Activated CD4-positive, alpha-beta T cell treated with anti-CD3 and anti-CD28 coated beads for 36 hours (primary cell): ENCODE measurements at regions of chr17 and their contacts with region 1.

Region 1: GRCh38 chr17:38667099-38667786 is 7.5 kb downstream of the EPOP start:
- DNase-seq: peak; percentile 75
- ATAC-seq: peak; percentile 75
- H3K4me3 Mint-ChIP-seq: no peak overlapping the region
- H3K27ac Mint-ChIP-seq: no peak overlapping the region
- H3K4me1 Mint-ChIP-seq: peaks cover 14% of the 10 kb centered on the region
- H3K27me3 Mint-ChIP-seq: peaks cover 37% of the 10 kb centered on the region

Region 2: DNA sequence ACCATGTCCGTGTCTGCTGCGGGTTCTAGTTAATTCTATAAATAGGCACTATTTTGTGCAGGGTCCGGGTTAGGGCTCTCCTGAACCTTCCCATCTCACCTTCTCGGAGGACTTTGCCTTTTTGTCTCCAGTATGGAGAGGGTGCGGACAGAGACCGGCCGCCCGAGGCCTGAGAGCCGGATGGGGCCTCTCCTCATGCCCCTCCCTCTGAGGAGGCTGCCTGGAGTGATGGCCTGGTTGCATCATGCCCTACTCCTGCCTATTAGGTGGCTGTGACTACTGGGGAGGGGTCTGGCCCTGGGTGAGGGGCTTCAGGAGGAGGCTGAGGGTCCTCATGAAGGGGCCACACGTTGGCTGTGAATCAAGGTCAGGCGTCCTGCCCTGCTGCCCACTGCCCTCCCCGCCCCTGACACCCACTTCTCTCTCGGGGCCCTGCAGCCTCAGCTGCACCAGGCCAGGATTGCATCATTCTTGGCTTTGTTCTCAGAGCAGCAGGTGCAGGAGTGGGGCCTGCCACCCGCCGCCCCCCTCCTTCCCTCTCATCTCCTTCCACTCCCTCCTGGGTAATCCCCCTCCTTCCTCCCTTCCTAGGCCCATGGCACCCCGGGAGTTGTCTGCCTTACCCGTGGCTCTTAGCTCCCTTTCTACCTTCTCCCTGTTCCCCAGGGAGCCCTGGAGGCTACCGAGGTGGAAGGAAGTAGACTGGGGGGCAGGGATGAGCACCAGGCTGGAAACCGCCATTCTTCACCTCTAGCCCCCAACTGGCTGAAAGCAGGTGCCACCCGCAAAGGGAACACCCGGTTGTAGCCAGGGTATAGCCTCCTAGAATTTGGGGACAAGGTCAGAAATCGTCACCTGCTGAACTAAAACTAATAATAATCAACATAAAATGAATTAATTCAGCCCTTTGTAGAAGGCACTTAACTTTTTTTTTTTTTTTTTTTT is 251.7 kb before region 1 on chr17:
- CTCF ChIA-PET with region 1: interaction called, 3 read pairs
- POLR2A ChIA-PET with region 1: no interaction called
- intact Hi-C with region 1: loop called in 1 of 2 experiments (anchors 2 kb)
- DNase-seq: peak; percentile 64
- ATAC-seq: peak; percentile 69
- H3K4me3 Mint-ChIP-seq: peak overlapping the region; percentile 62
- H3K27ac Mint-ChIP-seq: peak overlapping the region; percentile 92
- H3K4me1 Mint-ChIP-seq: peaks cover 13% of the 10 kb centered on the region
- H3K27me3 Mint-ChIP-seq: peaks cover 32% of the 10 kb centered on the region

Region 3: DNA sequence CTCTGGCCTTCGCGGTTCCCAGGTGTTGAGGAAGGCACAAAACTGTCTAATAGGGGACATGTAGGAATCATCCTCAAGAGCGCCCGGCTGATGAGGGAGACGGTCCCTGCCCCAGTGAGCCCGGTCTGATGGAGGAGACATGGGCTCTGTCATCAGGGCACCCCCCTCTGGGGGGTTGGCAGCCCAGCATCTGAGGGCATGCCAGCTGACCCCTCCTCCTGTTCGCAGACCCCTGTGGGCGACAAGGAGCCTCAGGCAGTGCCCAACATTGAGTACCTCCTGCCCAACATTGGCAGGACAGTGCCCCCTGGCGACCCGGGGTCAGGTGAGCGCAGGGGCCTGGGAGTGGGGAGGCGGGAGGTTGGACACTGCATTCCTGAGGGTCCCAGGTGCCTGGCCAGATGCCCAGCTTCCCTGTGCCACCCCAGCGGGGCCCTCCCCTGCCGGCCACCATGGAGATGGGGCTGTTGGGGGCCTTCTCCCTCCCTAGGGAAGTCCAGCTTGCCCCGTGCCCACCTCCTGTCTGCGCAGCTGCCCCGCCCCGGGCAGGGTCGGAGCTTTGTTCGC is 169.0 kb before region 1 on chr17:
- CTCF ChIA-PET with region 1: interaction called, 12 read pairs
- POLR2A ChIA-PET with region 1: interaction called, 3 read pairs
- intact Hi-C with region 1: no loop called
- DNase-seq: no peak
- ATAC-seq: no peak
- H3K4me3 Mint-ChIP-seq: no peak overlapping the region
- H3K27ac Mint-ChIP-seq: no peak overlapping the region
- H3K4me1 Mint-ChIP-seq: no peaks in the 10 kb centered on the region
- H3K27me3 Mint-ChIP-seq: no peaks in the 10 kb centered on the region

Region 4: GRCh38 chr17:38563362-38564253 is 103.6 kb before region 1 on chr17:
- CTCF ChIA-PET with region 1: interaction called, 145 read pairs
- POLR2A ChIA-PET with region 1: interaction called, 4 read pairs
- intact Hi-C with region 1: loop called (anchors 1 kb)
- DNase-seq: no peak
- ATAC-seq: no peak
- H3K4me3 Mint-ChIP-seq: no peak overlapping the region
- H3K27ac Mint-ChIP-seq: no peak overlapping the region
- H3K4me1 Mint-ChIP-seq: peaks cover 23% of the 10 kb centered on the region
- H3K27me3 Mint-ChIP-seq: peaks cover 71% of the 10 kb centered on the region

Region 5: DNA sequence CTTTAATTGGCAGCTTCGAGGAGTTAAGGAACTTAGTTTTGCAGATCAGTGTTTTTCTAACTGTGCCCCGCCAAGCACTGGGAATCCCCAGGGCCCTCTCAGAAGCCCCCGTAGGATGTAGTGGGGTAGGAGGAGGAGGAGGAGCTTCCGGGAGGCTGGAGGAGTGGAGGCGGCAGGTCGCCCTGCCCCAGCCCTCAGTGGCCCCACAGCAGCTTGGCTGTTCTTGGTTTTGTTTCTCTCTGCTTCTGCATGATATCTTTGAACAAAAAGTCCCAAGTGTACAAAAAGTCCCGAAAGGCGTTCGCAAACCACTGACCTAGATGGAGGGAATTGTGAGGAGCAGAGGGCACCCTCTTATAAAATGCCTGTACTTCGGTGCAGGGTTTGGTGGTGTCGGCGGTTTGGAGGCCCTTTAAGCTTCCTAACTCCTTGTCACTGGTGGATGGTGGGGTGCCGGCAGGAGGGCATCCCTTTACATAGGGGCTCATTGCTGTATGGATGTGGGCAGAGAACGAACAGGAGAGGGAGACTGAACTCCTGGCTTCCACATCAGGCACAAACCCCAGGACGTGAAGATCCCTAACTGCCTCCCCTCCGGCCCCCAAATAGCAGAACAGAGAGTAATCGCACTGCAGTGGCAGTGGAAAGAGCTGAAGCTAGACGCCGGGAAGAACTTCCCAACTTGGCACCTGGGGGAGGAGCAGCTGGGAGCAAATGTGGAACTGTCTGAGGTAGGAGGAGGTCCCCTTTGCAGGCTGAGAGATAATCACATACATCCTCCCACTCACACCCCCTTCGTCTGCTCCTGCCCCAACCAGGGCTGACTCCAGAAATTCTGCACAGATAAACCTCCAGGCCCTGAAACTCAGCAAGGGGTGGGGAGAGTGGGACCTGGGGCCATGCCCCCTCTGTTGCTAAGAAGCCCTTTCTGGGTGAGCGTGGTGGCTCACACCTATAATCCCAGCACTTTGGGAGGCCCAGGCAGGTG is 12.5 kb before region 1 on chr17:
- CTCF ChIA-PET with region 1: interaction called, 17 read pairs
- POLR2A ChIA-PET with region 1: no interaction called
- intact Hi-C with region 1: no loop called
- DNase-seq: no peak
- ATAC-seq: peak; percentile 51
- H3K4me3 Mint-ChIP-seq: no peak overlapping the region
- H3K27ac Mint-ChIP-seq: no peak overlapping the region
- H3K4me1 Mint-ChIP-seq: peaks cover 13% of the 10 kb centered on the region
- H3K27me3 Mint-ChIP-seq: peaks cover 17% of the 10 kb centered on the region

Region 6: DNA sequence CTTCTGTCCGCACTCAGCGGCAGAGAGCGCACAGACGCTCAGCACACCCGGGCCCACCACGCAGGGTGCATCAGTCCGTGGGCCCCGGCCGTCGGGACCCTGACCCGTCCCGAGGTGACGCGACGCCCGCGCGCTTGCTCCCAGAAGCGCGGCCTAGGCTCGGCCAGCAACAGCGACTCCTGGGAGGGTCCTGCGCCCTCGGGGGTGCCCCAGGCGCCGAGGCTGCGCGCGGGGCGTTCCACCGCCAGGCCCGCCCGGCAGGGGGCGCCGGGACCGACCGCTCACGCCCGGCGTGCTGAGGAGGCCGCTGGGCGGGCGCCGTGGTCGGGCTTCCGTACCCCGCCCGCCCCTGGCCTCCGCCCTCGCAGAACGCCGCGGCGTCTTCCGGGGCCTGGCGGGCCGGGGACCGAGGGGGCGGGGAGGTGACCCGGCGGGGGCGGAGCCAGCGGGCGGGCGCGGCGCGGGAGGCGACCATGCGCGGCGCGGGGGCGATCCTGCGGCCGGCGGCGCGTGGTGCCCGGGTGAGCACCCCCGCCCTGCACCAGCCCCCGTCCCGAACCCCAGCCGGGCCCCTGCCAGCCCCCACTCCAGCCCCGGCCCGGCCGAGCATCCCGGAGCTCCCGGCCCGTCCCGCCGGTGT is 62.8 kb after region 1 on chr17 and contains the start of gene CISD3:
- CTCF ChIA-PET with region 1: interaction called, 17 read pairs
- POLR2A ChIA-PET with region 1: interaction called, 4 read pairs
- intact Hi-C with region 1: no loop called
- DNase-seq: peak; percentile 92
- ATAC-seq: peak; percentile 66
- H3K4me3 Mint-ChIP-seq: peak within 1 kb of the TSS; percentile 91
- H3K27ac Mint-ChIP-seq: peak within 1 kb of the TSS; percentile 100
- H3K4me1 Mint-ChIP-seq: peaks cover 81% of the 10 kb centered on the region
- H3K27me3 Mint-ChIP-seq: no peaks in the 10 kb centered on the region
- total RNA-seq, gene CISD3: 49.4 to 58.6 TPM

Region 7: GRCh38 chr17:38794221-38794620 is 127.0 kb after region 1 on chr17:
- CTCF ChIA-PET with region 1: no interaction called
- POLR2A ChIA-PET with region 1: no interaction called
- intact Hi-C with region 1: no loop called
- DNase-seq: no peak
- ATAC-seq: no peak
- H3K4me3 Mint-ChIP-seq: no peak overlapping the region
- H3K27ac Mint-ChIP-seq: no peak overlapping the region
- H3K4me1 Mint-ChIP-seq: peaks cover 31% of the 10 kb centered on the region
- H3K27me3 Mint-ChIP-seq: no peaks in the 10 kb centered on the region